ENCODE measurements at regions of chr9 and their contacts with region 1.

Region 1: GRCh38 chr9:116271991-116272390 is 118.4 kb downstream of the PAPPA start:
- DNase-seq: no peak
- ATAC-seq: no peak
- H3K4me3 ChIP-seq: no peak overlapping the region
- H3K27ac ChIP-seq: no peak overlapping the region
- H3K4me1 ChIP-seq: no peaks in the 10 kb centered on the region
- H3K27me3 ChIP-seq: no peaks in the 10 kb centered on the region

Region 2: GRCh38 chr9:116212986-116213673 is 58.9 kb before region 1 on chr9:
- intact Hi-C with region 1: loop called in 1 of 4 experiments (anchors 2 kb)
- DNase-seq: no peak
- ATAC-seq: no peak
- H3K4me3 ChIP-seq: no peak overlapping the region
- H3K27ac ChIP-seq: no peak overlapping the region
- H3K4me1 ChIP-seq: no peaks in the 10 kb centered on the region
- H3K27me3 ChIP-seq: no peaks in the 10 kb centered on the region

Measured in right cardiac atrium (tissue), 5 donors.